Lower leg skin (tissue), 4 donors: ENCODE measurements at regions of chr1 and their contacts with region 1.

Region 1: DNA sequence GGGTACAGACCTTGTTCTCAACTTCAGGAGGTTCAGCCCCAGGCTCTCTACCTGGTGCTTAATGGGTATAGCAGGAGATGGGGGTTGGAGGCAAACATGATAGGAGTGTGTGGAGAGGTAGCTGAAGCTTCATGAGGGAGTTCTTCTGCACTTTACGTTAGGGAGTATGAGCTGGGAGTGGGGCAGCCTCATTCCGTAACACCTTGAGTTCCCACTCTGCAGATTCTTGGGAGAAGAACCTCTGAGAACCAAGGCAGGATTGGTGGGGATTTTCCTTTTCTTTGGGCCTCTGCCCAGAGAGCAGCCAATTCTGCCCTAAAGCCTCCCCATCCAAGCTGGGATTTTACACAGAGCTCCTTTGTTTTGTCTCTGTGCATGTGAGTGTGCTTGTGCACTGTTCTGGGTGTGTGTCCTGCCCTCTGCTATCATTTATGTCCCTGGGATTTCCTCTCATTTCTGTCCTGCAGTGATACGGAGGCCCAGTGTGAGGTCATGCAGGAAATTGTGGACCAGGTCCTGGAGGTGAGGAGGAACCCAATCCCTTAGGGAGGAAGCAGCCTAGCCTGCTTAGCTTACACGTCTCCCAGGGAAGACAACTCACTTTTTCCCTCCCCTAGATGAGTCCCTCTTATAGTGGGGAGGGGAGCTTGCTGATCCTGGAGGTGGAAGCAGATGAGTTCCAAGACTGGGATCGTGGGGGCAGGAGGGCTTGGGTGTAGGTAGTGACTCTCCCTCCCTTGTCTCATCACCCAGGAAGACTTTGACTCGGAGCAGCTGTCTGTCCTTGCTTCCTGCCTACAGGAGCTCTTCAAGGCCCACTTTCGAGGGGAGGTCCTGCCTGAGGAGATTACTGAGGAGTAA is 11.6 kb upstream of the SLC27A3 start:
- DNase-seq: no peak
- H3K4me3 ChIP-seq: no peak overlapping the region
- CTCF ChIP-seq: no peak
- POLR2A ChIP-seq: no peak

Region 2: DNA sequence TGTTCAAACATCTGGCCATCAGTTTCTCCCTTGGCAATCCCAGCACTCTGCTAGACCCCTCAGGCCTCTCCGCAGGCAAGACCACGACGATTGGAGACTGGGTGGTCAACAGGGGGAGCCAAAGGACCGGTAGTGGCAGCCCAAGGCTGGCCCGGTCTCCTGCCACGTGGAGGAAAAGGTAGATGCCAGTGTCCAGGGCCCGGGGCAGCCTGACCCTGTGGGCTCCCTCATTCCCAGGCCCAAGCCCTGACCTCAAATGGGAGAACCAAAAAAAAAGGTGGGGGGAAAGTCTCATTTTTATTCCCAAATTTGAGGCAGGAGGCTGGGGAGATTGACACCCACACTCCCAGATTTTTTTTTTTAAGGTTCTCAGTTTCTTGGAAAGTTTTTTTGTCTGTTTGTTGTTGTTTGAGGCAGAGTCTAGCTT is 252.6 kb before region 1 on chr1:
- intact Hi-C with region 1: loop called (anchors 10 kb)
- DNase-seq: peak in 1 of 2 donors; percentile 95
- H3K4me3 ChIP-seq: no peak overlapping the region
- CTCF ChIP-seq: peak in 1 of 3 donors; percentile 85
- POLR2A ChIP-seq: no peak

Region 3: GRCh38 chr1:153633716-153634665 is 129.6 kb before region 1 on chr1 and contains the start of gene CHTOP:
- intact Hi-C with region 1: no loop called
- DNase-seq: peak; percentile 99
- H3K4me3 ChIP-seq: peak within 1 kb of the TSS; percentile 81
- CTCF ChIP-seq: no peak
- POLR2A ChIP-seq: peak in 1 of 2 donors; percentile 57
- total RNA-seq, gene CHTOP: 56.1 to 86.9 (median 65.5) TPM